AG04449 (cell line): ENCODE measurements at regions of chr20 and their contacts with region 1.

Region 1: GRCh38 chr20:47220161-47220582 is 136.3 kb downstream of the ZMYND8 start:
- DNase-seq: no peak
- H3K4me3 ChIP-seq: no peak overlapping the region
- CTCF ChIP-seq: peak; percentile 57

Region 2: DNA sequence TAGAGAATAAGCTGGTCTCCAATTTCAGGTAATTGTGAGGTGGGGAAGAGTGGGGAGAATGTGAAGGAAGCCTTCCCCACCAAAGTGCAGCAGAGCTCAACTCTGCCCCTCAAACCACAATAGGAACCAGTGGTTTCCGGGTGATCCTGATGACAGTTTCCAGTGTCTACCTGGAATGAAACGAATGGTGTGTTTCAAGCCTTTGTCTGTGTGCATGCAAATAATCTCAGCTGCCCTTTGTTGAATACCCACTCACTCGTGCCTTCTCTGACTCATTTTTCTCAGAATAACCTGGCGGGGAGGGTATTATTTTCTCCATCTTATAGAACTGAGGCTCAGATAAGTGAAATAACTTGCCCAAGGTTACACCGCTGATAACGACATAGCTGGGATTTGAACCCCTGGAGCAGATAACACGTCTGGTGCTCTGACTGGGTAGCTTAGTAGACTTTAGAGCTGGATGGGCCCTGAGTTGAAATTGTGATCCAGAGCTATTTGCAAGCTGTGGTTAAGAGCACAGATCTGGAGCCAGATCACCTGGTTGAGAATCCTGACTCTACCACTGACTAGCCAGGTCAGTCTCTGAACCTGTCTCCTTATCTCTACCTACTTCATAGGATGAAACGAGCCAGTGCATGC is 240.4 kb before region 1 on chr20:
- CTCF ChIA-PET with region 1: no interaction called
- POLR2A ChIA-PET with region 1: no interaction called
- DNase-seq: no peak
- H3K4me3 ChIP-seq: no peak overlapping the region
- CTCF ChIP-seq: no peak

Region 3: GRCh38 chr20:47099825-47100441 is 120.2 kb before region 1 on chr20:
- CTCF ChIA-PET with region 1: no interaction called
- POLR2A ChIA-PET with region 1: no interaction called
- DNase-seq: no peak
- H3K4me3 ChIP-seq: no peak overlapping the region
- CTCF ChIP-seq: no peak

Region 4: DNA sequence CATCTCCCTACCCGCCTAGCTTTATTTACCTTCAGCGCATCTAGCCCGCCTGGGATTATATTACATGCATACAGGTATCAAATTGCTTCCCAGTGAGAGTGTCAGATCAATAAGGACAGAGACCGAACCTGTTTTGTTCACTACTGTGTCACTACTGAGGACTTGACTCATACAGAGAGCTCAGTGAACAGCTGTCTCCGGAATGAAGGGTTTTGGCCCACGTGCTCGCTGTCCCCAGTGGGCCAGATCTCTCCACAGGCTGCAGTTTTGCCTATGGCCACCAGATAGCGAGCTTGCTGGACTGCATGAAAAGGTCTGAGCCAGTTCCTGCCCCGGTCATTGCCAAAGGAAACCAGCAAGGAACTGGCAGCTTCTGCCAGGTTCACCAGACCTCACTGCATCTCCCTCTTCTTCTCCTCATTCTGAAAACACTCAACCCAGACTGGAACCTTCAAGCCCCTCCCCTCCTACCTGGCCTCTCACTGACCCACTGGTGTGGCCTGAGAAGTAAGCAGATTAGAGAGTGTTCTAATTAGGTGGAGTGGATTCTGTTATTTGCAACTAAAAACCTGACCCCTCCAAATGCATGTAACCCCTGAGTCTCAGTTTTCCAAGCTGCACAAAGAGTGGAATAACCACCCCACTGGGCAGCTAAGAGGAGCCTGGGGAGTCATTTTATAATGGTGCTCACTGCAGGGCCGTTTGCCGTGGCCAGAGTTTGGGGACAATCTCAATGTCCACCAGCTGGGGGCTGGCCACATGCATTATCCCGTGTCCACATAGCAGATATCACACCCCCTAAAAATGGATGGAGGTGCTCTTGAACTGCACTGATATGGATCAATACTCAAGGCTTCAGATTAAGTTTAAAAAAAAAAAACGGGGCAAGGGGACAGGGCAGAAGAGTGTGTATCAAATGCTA is 14.3 kb before region 1 on chr20:
- CTCF ChIA-PET with region 1: interaction called, 25 read pairs
- POLR2A ChIA-PET with region 1: no interaction called
- DNase-seq: no peak
- H3K4me3 ChIP-seq: no peak overlapping the region
- CTCF ChIP-seq: peak; percentile 74